ENCODE measurements at regions of chr5 and their contacts with region 1.

Region 1: DNA sequence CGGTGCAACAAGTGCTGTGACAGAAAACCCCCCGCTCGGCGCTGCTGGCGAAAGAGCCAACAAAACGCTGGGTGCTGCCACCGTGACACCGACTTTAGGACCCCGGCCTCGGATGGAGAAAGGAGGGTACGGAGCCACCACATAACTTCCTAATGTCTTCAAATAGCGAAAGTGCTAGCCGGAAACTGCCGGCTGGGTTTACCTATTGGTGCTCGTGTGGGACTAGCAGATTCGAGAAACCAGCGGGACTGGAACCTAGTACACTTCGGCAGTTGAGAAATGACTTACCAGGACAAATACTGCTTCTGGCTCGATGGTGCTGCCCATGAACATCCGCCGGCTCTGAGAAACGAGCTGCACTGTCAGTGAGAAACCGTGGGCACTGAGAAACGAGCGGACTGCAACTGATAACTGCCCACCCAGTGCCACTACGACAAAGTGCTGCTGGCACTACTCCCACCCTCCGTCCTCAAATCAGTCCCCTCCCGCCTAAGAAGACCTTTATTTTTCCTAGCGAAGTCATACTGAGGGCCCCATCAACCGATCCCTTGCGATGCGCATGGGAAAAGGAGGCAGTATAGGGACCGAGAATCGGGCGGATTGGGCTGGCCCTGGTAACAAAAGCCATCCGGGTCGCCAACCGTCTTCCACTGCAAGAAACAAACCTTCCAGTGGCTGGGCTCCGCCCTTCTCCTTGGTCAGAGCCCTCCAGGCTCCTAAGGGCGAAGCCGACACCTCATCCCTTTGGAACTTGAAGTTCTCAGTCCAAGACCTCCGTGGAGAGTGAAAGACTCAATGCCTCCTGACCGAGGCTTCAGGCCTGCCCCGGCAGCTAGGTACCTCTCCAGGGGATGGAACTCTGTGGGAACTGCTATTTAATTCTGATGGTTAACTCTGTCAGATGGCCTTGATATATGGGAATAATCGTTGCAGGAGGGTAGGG is 27.0 kb upstream of the ANXA2R start:
- DNase-seq: peak; percentile 91
- ATAC-seq: peak; percentile 51
- H3K4me3 Mint-ChIP-seq: peak overlapping the region; percentile 97
- H3K27ac Mint-ChIP-seq: peak overlapping the region; percentile 99
- H3K4me1 Mint-ChIP-seq: peaks cover 37% of the 10 kb centered on the region
- H3K27me3 Mint-ChIP-seq: no peaks in the 10 kb centered on the region

Region 2: GRCh38 chr5:42950440-42951292 is 116.4 kb before region 1 on chr5:
- CTCF ChIA-PET with region 1: interaction called, 16 read pairs
- POLR2A ChIA-PET with region 1: interaction called, 5 read pairs
- intact Hi-C with region 1: loop called (anchors 1 kb)
- DNase-seq: peak; percentile 82
- ATAC-seq: peak; percentile 59
- H3K4me3 Mint-ChIP-seq: peak overlapping the region; percentile 83
- H3K27ac Mint-ChIP-seq: peak overlapping the region; percentile 91
- H3K4me1 Mint-ChIP-seq: peaks cover 17% of the 10 kb centered on the region
- H3K27me3 Mint-ChIP-seq: no peaks in the 10 kb centered on the region

Region 3: DNA sequence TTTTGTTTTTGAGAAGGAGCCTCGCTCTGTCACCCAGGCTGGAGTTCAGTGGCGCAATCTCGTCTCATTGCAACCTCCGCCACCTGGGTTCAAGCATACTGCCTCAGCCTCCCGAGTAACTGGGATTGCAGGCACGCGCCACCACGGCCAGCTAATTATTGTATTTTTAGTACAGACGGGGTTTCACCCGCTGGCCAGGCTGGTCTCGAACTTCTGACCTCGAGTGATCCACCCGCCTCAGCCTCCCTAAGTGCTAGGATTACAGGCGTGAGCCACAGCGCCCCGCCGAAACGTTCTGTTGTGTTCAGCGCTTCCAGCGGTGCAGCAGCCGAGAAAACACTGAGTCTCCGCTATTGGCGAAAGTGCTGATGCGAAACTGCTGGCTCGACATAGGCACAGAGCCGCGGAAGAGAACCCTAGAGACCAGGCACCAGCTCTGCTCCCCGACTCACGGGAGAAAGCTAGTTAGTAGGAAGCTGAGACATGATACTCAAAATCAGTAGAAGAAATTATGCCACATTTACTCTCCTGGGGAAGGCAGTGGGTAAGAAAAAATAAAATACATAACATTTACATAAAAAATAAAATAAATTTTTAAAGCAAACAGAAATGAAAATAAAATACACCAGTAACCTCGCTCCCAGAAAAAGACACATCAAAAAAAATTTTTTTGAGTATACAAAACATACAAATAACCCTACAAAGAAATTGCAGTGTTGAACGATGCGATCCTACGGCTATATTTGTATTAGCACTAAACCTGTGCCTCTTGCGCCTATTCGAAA is 58.5 kb before region 1 on chr5:
- CTCF ChIA-PET with region 1: interaction called, 5 read pairs
- POLR2A ChIA-PET with region 1: interaction called, 7 read pairs
- intact Hi-C with region 1: loop called (anchors 1 kb)
- DNase-seq: peak; percentile 94
- ATAC-seq: peak; percentile 64
- H3K4me3 Mint-ChIP-seq: peak overlapping the region; percentile 76
- H3K27ac Mint-ChIP-seq: peak overlapping the region; percentile 94
- H3K4me1 Mint-ChIP-seq: peaks cover 21% of the 10 kb centered on the region
- H3K27me3 Mint-ChIP-seq: no peaks in the 10 kb centered on the region

Region 4: GRCh38 chr5:43049236-43049635 is 17.8 kb before region 1 on chr5:
- CTCF ChIA-PET with region 1: interaction called, 17 read pairs
- POLR2A ChIA-PET with region 1: interaction called, 3 read pairs
- intact Hi-C with region 1: no loop called
- DNase-seq: no peak
- ATAC-seq: no peak
- H3K4me3 Mint-ChIP-seq: no peak overlapping the region
- H3K27ac Mint-ChIP-seq: no peak overlapping the region
- H3K4me1 Mint-ChIP-seq: peaks cover 42% of the 10 kb centered on the region
- H3K27me3 Mint-ChIP-seq: no peaks in the 10 kb centered on the region

Region 5: DNA sequence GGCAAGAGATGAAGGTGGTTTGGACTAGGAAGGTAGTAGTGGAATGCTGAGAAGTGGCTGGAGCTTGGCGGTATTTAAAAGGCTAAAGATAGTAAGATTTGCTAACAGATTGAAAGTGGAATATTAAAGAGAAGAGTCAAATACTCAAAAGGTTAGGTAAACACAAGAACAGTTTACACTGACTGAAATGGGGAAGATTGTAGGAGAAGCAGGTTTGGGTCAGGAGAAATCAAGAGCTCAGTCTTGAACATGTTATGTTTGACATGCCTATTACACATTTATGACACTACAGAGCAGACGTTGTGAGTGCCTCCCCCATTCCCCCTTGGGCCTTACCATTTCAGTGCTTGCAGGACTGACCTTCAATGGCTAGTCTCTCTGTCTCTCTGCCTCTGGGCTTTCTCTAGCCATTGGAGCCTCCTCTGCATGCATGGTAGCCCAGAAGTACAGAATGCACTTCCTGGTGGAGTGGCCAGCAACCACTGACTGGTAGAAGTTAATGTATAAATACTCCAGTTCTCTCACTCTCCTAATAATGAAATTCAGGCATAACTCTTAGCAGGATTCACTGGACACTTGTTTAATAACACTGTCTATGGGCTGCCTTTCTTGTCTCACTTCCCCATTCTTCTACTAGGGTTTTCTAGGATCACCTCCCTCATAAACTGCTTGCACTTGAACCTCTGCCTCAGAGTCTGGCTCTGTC is 189.3 kb after region 1 on chr5:
- CTCF ChIA-PET with region 1: no interaction called
- POLR2A ChIA-PET with region 1: no interaction called
- intact Hi-C with region 1: no loop called
- DNase-seq: no peak
- ATAC-seq: no peak
- H3K4me3 Mint-ChIP-seq: no peak overlapping the region
- H3K27ac Mint-ChIP-seq: no peak overlapping the region
- H3K4me1 Mint-ChIP-seq: no peaks in the 10 kb centered on the region
- H3K27me3 Mint-ChIP-seq: peaks cover 27% of the 10 kb centered on the region

Region 6: GRCh38 chr5:43305948-43306565 is 239.0 kb after region 1 on chr5:
- CTCF ChIA-PET with region 1: interaction called, 3 read pairs
- POLR2A ChIA-PET with region 1: interaction called, 3 read pairs
- intact Hi-C with region 1: loop called in 1 of 2 experiments (anchors 2 kb)
- DNase-seq: no peak
- ATAC-seq: peak; percentile 37
- H3K4me3 Mint-ChIP-seq: peak overlapping the region; percentile 12
- H3K27ac Mint-ChIP-seq: peak overlapping the region; percentile 63
- H3K4me1 Mint-ChIP-seq: peaks cover 80% of the 10 kb centered on the region
- H3K27me3 Mint-ChIP-seq: no peaks in the 10 kb centered on the region

Region 7: GRCh38 chr5:43602461-43603343 is 535.6 kb after region 1 on chr5 and contains the start of gene NNT:
- CTCF ChIA-PET with region 1: no interaction called
- POLR2A ChIA-PET with region 1: no interaction called
- intact Hi-C with region 1: loop called in 1 of 2 experiments (anchors 2 kb)
- DNase-seq: peak; percentile 89
- ATAC-seq: peak; percentile 76
- H3K4me3 Mint-ChIP-seq: peak within 1 kb of the TSS; percentile 95
- H3K27ac Mint-ChIP-seq: peak within 1 kb of the TSS; percentile 93
- H3K4me1 Mint-ChIP-seq: peaks cover 29% of the 10 kb centered on the region
- H3K27me3 Mint-ChIP-seq: no peaks in the 10 kb centered on the region
- total RNA-seq, gene NNT: 55.4 to 77.5 TPM